ENCODE measurements at regions of chr4 and their contacts with region 1.

Region 1: GRCh38 chr4:101155368-101155767 is 192.0 kb downstream of the PPP3CA start:
- DNase-seq: peak; percentile 87
- ATAC-seq: peak; percentile 93
- H3K4me3 ChIP-seq: no peak overlapping the region
- H3K27ac ChIP-seq: peak overlapping the region; percentile 100
- H3K4me1 ChIP-seq: peaks cover 29% of the 10 kb centered on the region
- H3K27me3 ChIP-seq: no peaks in the 10 kb centered on the region
- CTCF ChIP-seq: no peak

Region 2: DNA sequence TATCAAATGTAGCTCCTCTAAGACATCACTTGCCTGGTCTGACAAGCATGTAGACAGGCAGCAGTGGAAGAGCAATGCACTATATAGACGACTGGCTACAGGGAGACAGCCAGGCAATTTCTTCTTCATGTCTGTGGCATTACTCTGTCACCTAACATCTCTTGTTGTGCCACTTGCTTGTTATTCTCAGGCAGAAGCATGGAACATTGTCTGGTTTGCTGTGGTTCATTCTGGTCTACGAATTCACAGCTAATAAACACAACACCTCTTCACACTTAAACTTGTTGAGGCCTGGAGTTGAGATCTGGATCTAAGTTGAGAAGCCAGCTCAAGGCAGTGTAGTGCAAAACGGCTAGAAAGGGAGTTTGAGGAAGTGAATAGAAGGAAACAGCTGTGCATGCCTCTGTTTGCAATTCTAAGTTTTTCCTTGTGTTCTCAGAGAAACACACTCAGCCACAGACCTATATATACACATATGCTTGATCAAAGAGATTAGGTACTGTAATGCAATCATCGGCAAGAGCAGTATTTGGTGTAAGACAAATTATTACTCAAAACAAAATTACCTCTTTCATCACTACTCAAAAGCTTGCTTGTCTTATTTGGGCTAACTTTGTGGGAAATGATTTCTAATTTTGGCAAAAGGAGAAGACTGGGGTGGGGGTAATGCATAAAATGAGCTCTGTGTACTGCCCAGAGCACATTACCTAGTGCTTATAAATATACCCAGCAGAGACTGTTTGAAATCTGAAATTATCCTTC is 51.8 kb before region 1 on chr4:
- CTCF ChIA-PET with region 1: no interaction called
- POLR2A ChIA-PET with region 1: no interaction called
- intact Hi-C with region 1: loop called (anchors 5 kb)
- DNase-seq: no peak
- ATAC-seq: no peak
- H3K4me3 ChIP-seq: no peak overlapping the region
- H3K27ac ChIP-seq: no peak overlapping the region
- H3K4me1 ChIP-seq: peaks cover 14% of the 10 kb centered on the region
- H3K27me3 ChIP-seq: no peaks in the 10 kb centered on the region
- CTCF ChIP-seq: no peak